Endothelial cell of umbilical vein (primary cell): ENCODE measurements at regions of chr6 and their contacts with region 1.

Region 1: GRCh38 chr6:3251462-3252314 is 7.1 kb upstream of the PSMG4 start:
- DNase-seq: peak; percentile 79
- H3K4me3 ChIP-seq: no peak overlapping the region
- H3K27ac ChIP-seq: no peak overlapping the region
- H3K4me1 ChIP-seq: no peaks in the 10 kb centered on the region
- H3K27me3 ChIP-seq: peaks cover 11 to 14% of the 10 kb centered on the region in 2 experiments
- CTCF ChIP-seq: peak; percentile 95 to 97
- POLR2A ChIP-seq: no peak

Region 2: DNA sequence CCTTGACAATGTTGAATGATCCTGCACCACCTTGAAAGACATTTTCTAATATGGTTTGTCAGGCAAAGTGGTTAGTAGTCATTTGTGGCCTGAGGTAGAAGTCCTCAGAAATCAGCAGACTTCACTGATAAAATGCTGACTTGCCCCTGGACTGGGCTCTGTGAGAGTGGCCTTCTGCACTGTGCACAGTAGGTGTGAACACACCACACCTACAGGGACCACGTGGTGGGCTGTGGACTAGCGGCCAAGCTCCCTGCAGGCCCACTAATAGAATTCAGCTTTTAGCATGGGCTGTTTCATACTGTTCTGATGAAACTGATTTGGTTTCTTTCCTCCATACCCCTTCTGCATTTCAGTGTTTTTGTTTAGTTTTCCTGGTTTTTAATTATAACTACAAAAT is 125.9 kb before region 1 on chr6:
- CTCF ChIA-PET with region 1: interaction called, 121 read pairs
- POLR2A ChIA-PET with region 1: no interaction called
- dilution Hi-C with region 1: no loop called
- intact Hi-C with region 1: loop called (anchors 1 kb)
- DNase-seq: no peak
- H3K4me3 ChIP-seq: no peak overlapping the region
- H3K27ac ChIP-seq: no peak overlapping the region
- H3K4me1 ChIP-seq: no peaks in the 10 kb centered on the region
- H3K27me3 ChIP-seq: no peaks in the 10 kb centered on the region
- CTCF ChIP-seq: no peak
- POLR2A ChIP-seq: no peak

Region 3: DNA sequence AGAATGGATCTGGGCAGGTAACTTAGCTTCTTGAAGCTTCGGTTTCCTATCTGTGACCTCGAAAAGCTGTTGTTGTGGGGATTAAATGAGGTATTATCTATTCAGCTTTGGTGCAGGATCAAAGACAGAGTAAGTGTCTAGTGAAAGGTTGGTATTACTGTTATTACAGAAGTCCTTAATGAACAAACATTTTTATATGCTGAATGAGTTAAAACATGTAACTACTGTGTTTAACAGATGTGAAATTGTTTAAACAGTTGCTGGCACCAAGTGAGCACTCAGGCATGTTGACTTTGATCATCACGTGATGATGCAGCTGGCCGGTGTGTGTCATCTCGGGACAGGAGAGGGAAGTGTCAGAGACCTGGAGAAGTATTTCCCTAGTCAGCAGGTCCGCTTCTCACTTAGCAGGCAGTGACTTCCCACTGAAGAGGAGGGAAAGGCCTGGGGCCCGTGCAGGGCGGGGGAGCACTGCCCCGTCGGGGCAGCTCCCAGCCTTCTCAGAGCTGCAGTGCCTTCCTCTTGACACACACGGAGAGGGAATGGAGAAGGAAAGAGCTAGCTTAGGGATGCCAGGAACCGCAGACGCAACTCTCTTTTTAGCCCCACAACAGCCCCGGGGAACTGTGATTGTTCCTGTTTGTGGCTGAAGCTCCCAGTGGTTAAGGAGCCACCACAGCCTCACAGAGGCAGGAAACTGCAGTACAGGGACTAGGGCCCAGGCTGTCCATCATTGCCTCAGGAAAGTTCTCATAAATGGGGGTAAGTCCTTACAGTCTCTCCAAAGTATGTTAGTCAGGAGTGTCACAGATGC is 112.4 kb before region 1 on chr6:
- CTCF ChIA-PET with region 1: interaction called, 19 read pairs
- POLR2A ChIA-PET with region 1: no interaction called
- dilution Hi-C with region 1: no loop called
- intact Hi-C with region 1: no loop called
- DNase-seq: no peak
- H3K4me3 ChIP-seq: no peak overlapping the region
- H3K27ac ChIP-seq: peak overlapping the region; percentile 72
- H3K4me1 ChIP-seq: peaks cover 13% of the 10 kb centered on the region
- H3K27me3 ChIP-seq: no peaks in the 10 kb centered on the region
- CTCF ChIP-seq: no peak
- POLR2A ChIP-seq: no peak

Region 4: GRCh38 chr6:3162565-3163247 is 89.0 kb before region 1 on chr6:
- CTCF ChIA-PET with region 1: interaction called, 45 read pairs
- POLR2A ChIA-PET with region 1: interaction called, 5 read pairs
- dilution Hi-C with region 1: no loop called
- intact Hi-C with region 1: loop called (anchors 1 kb)
- DNase-seq: peak; percentile 70
- H3K4me3 ChIP-seq: peak overlapping the region; percentile 46 to 64 (median 62)
- H3K27ac ChIP-seq: peak overlapping the region; percentile 63
- H3K4me1 ChIP-seq: peaks cover 30% of the 10 kb centered on the region
- H3K27me3 ChIP-seq: no peaks in the 10 kb centered on the region
- CTCF ChIP-seq: peak in 1 of 2 donors; percentile 19
- POLR2A ChIP-seq: peak; percentile 34

Region 5: GRCh38 chr6:3231247-3232016 is 20.3 kb before region 1 on chr6:
- CTCF ChIA-PET with region 1: interaction called, 13 read pairs
- POLR2A ChIA-PET with region 1: no interaction called
- dilution Hi-C with region 1: no loop called
- intact Hi-C with region 1: no loop called
- DNase-seq: peak; percentile 46
- H3K4me3 ChIP-seq: peak overlapping the region; percentile 42 to 64 (median 45)
- H3K27ac ChIP-seq: no peak overlapping the region
- H3K4me1 ChIP-seq: peaks cover 23% of the 10 kb centered on the region
- H3K27me3 ChIP-seq: peaks cover 72 to 86% of the 10 kb centered on the region in 2 experiments
- CTCF ChIP-seq: no peak
- POLR2A ChIP-seq: no peak

Region 6: DNA sequence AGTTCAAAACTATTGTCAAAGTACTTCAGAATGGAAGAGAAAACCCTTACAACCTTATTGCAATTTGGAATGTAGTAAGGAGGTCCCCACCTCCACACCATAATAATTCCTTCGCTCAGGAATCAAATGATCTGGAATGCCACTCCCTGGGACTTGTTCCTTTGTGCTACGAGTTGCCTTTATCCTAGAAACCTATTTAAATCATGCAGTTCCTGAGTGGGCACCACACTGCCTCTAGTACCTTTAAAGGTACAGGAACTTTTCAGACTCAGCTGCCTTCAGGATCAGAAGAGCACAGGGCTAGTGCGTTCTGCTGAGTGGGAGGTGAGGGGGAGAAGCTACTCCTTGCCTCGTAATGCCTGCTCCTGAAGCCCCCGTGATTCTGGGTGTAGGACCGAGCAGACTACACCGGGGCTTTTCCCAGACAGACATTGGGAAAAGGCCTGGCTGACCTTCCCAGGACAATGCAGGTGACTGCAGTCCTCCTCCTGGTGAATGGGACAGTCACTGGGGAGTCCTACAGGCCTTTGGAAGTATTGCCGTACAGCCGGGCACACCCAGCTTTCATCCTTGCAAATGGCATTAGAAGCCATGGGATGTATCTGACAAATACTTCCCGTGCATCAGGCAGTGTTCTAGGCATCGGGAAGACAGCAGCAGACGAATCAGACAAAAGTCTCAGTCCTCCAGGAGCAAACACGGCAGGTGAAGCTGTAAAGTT is 12.4 kb before region 1 on chr6:
- CTCF ChIA-PET with region 1: interaction called, 17 read pairs
- POLR2A ChIA-PET with region 1: no interaction called
- dilution Hi-C with region 1: no loop called
- intact Hi-C with region 1: no loop called
- DNase-seq: no peak
- H3K4me3 ChIP-seq: no peak overlapping the region
- H3K27ac ChIP-seq: no peak overlapping the region
- H3K4me1 ChIP-seq: no peaks in the 10 kb centered on the region
- H3K27me3 ChIP-seq: peaks cover 41 to 46% of the 10 kb centered on the region in 2 experiments
- CTCF ChIP-seq: peak in 1 of 2 donors; percentile 6
- POLR2A ChIP-seq: no peak